Esophagus muscularis mucosa (tissue), 4 donors: ENCODE measurements at regions of chr5 and their contacts with region 1.

Region 1: GRCh38 chr5:66987949-66988838 is 208.4 kb downstream of the CD180 start:
- DNase-seq: no peak
- H3K4me3 ChIP-seq: no peak overlapping the region
- H3K27ac ChIP-seq: no peak overlapping the region
- H3K4me1 ChIP-seq: peaks cover 14 to 25% (median 23%) of the 10 kb centered on the region in 4 donors
- H3K27me3 ChIP-seq: no peaks in the 10 kb centered on the region
- CTCF ChIP-seq: peak; percentile 74 to 95 (median 77)
- EP300 ChIP-seq: no peak
- POLR2A ChIP-seq: no peak

Region 2: DNA sequence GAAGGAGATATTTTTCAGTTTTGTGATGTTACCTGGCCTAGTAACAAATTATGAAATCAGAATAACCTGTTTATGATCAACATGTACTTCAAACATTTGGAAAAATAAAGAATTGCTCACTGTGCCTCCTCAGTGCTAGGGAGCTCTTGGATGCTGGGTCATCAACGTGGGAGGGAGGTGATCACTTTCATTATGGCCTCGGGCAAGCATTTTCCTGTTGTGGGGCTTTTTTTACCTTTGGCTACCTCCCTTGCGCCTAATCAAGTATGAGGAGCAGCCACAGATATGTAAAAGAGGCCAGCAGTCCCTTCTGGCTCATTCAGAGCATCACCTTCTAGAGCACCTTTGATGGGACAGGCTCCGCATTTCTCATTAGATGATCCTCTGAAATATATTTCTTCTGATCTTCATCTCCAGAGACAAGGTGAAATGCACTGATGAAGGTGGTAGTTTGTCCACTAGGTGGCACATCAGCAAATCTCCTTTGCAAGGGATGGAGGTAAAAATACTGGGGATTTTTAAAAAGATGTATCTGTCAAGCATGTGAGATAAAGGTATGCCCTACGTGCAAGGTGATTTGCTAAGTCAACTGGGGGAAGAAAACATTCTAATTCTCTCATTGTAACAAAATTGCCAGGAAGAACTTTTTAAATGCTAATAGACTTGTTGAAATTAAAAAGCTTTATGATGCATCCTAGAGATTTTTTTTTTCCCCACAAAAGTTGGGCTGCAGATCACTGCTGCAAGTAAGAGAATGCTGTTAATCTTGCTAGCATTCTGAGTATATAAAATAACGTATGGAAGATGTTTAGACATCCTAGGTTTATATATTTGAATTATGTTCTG is 173.8 kb before region 1 on chr5:
- intact Hi-C with region 1: loop called (anchors 10 kb)
- DNase-seq: no peak
- H3K4me3 ChIP-seq: no peak overlapping the region
- H3K27ac ChIP-seq: no peak overlapping the region
- H3K4me1 ChIP-seq: peaks cover 0 to 6% (median 0%) of the 10 kb centered on the region in 4 donors
- H3K27me3 ChIP-seq: no peaks in the 10 kb centered on the region
- CTCF ChIP-seq: peak; percentile 58 to 76 (median 71)
- EP300 ChIP-seq: no peak
- POLR2A ChIP-seq: no peak

Region 3: GRCh38 chr5:67095346-67096171 is 107.4 kb after region 1 on chr5:
- intact Hi-C with region 1: loop called (anchors 5 kb)
- DNase-seq: no peak
- H3K4me3 ChIP-seq: peak overlapping the region; percentile 15 to 30 (median 18)
- H3K27ac ChIP-seq: peak overlapping the region; percentile 58 to 64 (median 62)
- H3K4me1 ChIP-seq: peaks cover 36 to 59% (median 57%) of the 10 kb centered on the region in 4 donors
- H3K27me3 ChIP-seq: no peaks in the 10 kb centered on the region
- CTCF ChIP-seq: no peak
- EP300 ChIP-seq: no peak
- POLR2A ChIP-seq: no peak

Region 4: DNA sequence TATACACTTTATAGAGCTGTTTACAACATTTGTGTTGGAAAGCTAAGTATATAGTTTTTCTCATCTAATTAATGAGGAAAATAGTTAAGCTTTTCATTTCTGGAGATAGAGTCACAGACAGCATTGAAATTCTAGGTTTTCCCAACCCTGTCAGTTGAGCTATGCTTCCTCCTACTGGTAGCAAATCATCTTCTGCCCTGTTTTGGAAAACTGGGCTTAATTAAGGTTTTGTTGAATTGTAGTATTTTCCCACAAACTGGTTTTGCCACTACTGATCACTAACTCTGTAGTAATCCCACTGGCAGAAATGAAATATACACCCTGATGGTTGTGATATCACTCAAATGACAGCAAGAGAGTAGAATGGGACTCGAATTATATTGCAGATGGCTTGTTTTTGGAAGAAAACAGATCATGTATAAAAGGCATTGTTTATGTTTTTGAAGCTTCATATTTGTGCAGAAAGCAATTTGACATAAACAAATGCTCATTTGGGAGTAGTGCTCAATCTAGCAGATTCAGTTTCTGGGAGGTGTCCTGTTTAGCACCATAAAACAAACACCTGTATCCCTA is 161.8 kb after region 1 on chr5:
- intact Hi-C with region 1: loop called (anchors 5 kb)
- DNase-seq: no peak
- H3K4me3 ChIP-seq: peak overlapping the region in 1 of 4 donors; percentile 33
- H3K27ac ChIP-seq: no peak overlapping the region
- H3K4me1 ChIP-seq: peaks cover 0 to 24% (median 10%) of the 10 kb centered on the region in 4 donors
- H3K27me3 ChIP-seq: no peaks in the 10 kb centered on the region
- CTCF ChIP-seq: peak; percentile 32 to 51 (median 44)
- EP300 ChIP-seq: no peak
- POLR2A ChIP-seq: no peak